ENCODE measurements at regions of chr14 and their contacts with region 1.

Region 1: GRCh38 chr14:105617201-105617777 is 90.9 kb downstream of the TMEM121 start:
- DNase-seq: peak in 1 of 2 donors; percentile 71
- ATAC-seq: peak; percentile 56
- H3K4me3 ChIP-seq: no peak overlapping the region
- H3K27ac ChIP-seq: no peak overlapping the region
- H3K4me1 ChIP-seq: no peaks in the 10 kb centered on the region
- H3K27me3 ChIP-seq: no peaks in the 10 kb centered on the region

Region 2: DNA sequence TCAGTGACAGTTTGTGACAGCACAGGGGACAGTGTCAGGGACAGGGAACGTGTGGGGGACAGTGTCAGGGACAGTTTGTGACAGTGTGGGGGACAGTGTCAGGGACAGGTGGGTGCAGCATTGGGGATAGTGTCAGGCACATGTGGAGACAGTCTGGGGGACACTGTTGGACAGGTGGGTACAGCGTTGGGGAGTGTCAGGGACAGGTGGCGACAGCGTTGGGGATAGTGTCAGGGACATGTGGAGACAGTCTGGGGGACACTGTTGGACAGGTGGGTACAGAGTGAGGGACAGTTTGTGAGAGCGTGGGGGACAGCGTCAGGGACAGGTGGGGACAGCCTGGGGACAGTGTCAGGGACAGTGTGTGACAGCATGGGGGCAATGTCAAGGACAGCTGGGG is 49.1 kb after region 1 on chr14:
- intact Hi-C with region 1: no loop called
- DNase-seq: peak in 1 of 2 donors; percentile 28
- ATAC-seq: no peak
- H3K4me3 ChIP-seq: no peak overlapping the region
- H3K27ac ChIP-seq: no peak overlapping the region
- H3K4me1 ChIP-seq: no peaks in the 10 kb centered on the region
- H3K27me3 ChIP-seq: no peaks in the 10 kb centered on the region

Region 3: DNA sequence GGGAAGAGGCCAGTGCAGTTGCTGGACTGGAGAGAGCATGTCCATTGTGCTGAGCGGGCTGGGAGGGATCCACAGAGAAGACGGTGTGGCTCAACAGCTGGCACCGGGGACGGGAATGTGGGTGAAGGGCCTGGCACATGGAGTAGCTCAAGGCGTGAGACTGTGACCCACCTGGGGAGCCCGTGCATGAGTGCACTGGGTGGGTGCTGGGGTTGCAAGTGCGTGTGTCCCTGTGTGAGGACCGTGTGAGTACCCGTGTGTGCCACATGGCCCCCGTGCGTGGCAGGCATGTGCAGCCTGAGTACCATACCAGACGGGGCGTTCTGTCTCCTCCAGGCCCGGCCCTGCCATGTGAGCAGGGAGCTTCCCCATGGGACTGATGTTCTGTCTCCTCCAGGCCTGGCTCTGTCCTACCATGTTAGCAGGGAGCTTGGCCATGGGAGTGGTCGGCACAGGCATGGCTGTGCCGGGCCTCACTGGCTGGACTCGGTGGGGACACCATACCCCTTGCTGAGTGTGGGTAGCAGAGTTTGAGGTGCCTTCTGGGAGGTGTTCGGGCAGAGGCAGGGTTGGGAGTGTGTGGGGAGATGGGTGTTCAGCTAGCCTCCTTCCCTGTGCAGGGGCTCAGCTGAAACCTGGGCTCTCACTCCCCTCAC is 143.5 kb after region 1 on chr14:
- intact Hi-C with region 1: loop called (anchors 5 kb)
- DNase-seq: peak in 1 of 2 donors; percentile 63
- ATAC-seq: peak; percentile 52
- H3K4me3 ChIP-seq: no peak overlapping the region
- H3K27ac ChIP-seq: no peak overlapping the region
- H3K4me1 ChIP-seq: no peaks in the 10 kb centered on the region
- H3K27me3 ChIP-seq: no peaks in the 10 kb centered on the region